ENCODE measurements at regions of chr11 and their contacts with region 1.

Region 1: GRCh38 chr11:7513234-7514098 is at the start of gene PPFIBP2:
- DNase-seq: peak; percentile 85
- ATAC-seq: peak; percentile 95
- H3K4me3 Mint-ChIP-seq: peak within 1 kb of the TSS; percentile 83
- H3K27ac Mint-ChIP-seq: peak within 1 kb of the TSS; percentile 85
- H3K4me1 Mint-ChIP-seq: peaks cover 19% of the 10 kb centered on the region
- H3K27me3 Mint-ChIP-seq: peaks cover 25% of the 10 kb centered on the region
- total RNA-seq, gene PPFIBP2: 7.8 to 10.0 TPM

Region 2: DNA sequence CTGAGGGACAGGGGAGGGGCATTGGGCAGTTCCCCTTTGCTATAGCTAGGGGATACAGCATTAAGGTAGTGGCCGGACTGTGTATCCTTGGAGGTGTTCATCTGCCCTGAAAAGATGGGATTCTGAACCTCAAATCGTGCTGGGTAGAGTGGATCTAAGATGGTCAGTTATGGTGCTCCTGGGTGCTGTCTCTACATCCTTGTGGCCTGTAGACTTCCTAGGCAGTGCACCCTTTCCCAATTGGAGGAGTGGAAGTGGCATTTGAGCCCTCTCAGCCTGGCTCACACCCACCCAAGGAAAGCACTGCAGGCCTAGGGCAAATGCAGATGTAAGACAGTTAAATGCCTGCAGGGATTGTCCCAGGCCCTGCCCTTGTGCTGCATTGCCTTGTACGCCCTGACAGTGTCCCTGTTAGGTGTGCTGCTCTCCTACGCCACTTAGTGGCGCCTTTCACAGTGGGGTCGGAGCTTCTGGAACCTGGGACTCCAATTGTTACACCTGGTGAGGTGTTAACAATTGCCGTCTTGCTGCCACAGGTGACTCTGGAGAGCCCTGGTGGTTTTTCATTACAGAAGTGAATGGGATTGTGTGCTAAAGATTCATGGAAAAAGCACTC is 35.3 kb after region 1 on chr11:
- CTCF ChIA-PET with region 1: interaction called, 11 read pairs
- DNase-seq: peak; percentile 50
- ATAC-seq: peak; percentile 67
- H3K4me3 Mint-ChIP-seq: no peak overlapping the region
- H3K27ac Mint-ChIP-seq: no peak overlapping the region
- H3K4me1 Mint-ChIP-seq: peaks cover 1% of the 10 kb centered on the region
- H3K27me3 Mint-ChIP-seq: no peaks in the 10 kb centered on the region

Region 3: DNA sequence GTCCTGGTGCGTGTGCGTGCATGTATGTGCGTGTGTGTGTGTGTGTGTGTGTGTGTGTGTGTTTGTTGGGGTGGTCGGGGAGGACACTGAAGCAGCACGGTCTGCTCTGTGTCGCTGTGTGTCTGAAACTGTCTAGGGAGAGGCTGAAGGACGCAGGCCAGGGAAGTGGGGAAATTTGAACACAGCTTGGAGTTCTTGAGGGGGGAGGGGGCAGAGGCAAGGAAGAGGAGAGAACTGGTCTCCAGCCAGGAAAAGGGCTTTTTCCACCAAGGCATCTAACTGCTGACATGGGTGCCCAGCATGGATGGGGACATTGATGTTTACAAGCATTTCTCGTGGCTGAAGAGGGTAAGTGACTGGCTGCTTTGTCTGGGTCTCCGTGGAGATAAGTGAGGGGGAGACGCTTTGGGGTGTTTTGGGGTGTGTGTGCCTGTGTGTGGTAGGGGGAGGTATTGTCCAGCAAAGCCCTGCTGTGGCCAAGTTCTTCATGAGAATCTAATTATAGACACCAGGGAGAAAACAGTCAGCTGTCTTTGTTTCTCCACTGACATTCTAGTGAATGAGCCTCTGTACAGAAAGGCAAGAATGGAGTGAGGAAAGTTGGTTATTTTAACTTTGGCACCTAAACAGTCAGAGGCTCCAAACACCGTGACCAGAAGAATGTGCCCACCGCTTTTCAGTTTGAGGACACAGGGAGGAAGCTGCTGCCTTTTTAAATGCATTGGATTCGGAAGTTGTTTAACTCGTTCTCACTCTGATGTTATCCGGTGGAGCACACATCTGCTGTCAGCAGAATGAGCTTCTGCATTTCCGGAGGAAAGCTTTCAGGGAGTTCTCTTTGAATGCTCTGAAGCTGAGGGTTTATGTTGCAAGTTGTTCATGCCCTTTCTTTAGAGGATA is 64.1 kb after region 1 on chr11:
- CTCF ChIA-PET with region 1: interaction called, 18 read pairs
- DNase-seq: peak; percentile 43
- ATAC-seq: peak; percentile 72
- H3K4me3 Mint-ChIP-seq: peak overlapping the region; percentile 38
- H3K27ac Mint-ChIP-seq: peak overlapping the region; percentile 77
- H3K4me1 Mint-ChIP-seq: peaks cover 42% of the 10 kb centered on the region
- H3K27me3 Mint-ChIP-seq: peaks cover 5% of the 10 kb centered on the region

Region 4: GRCh38 chr11:7657306-7658025 is 144.0 kb after region 1 on chr11:
- CTCF ChIA-PET with region 1: interaction called, 38 read pairs
- DNase-seq: peak; percentile 54
- ATAC-seq: peak; percentile 76
- H3K4me3 Mint-ChIP-seq: no peak overlapping the region
- H3K27ac Mint-ChIP-seq: no peak overlapping the region
- H3K4me1 Mint-ChIP-seq: no peaks in the 10 kb centered on the region
- H3K27me3 Mint-ChIP-seq: no peaks in the 10 kb centered on the region

Region 5: DNA sequence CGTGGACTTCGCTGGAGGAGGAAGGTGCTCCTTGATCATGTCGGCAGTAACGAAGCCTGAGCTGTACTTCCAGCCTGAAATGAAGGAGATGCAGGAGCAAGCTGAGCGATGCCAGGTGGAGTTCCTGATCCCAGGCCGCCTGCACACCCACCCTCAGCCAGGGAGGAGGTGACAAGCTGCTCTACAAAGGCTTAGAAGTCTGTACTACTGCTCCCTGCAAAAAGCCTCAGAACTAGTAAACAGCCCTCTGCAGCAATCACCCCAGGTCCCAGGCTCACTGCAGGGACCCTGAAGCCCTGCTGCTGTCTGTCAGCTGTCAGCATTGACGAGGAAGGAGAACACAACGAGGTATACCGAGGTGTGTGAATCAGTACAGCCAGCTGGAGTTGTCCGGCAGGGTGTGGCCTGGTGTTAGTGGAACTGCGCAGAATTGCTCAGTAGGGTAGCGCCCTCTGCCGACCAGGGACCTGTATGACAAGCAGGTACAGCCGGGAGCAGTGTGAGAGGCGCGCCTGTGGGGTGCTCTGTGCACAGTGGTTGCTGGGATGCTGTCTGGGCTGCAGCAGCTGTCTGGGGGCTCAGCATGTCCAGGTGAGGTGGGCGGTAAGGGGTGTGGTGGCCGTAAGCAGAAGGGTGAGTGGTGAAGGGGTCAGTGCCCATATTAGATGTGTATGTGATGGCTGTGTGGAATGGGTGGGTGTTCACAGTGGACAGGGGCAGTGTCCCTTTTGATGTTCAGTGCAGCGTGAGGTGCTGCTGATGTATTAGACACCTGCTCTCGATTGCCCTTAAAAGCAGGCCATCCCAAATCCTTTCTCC is 152.2 kb after region 1 on chr11:
- CTCF ChIA-PET with region 1: interaction called, 34 read pairs
- DNase-seq: peak; percentile 85
- ATAC-seq: peak; percentile 96
- H3K4me3 Mint-ChIP-seq: no peak overlapping the region
- H3K27ac Mint-ChIP-seq: no peak overlapping the region
- H3K4me1 Mint-ChIP-seq: no peaks in the 10 kb centered on the region
- H3K27me3 Mint-ChIP-seq: no peaks in the 10 kb centered on the region

Region 6: GRCh38 chr11:7696424-7696823 is 183.0 kb after region 1 on chr11:
- CTCF ChIA-PET with region 1: interaction called, 13 read pairs
- DNase-seq: no peak
- ATAC-seq: no peak
- H3K4me3 Mint-ChIP-seq: no peak overlapping the region
- H3K27ac Mint-ChIP-seq: no peak overlapping the region
- H3K4me1 Mint-ChIP-seq: peaks cover 2% of the 10 kb centered on the region
- H3K27me3 Mint-ChIP-seq: peaks cover 39% of the 10 kb centered on the region

Region 7: DNA sequence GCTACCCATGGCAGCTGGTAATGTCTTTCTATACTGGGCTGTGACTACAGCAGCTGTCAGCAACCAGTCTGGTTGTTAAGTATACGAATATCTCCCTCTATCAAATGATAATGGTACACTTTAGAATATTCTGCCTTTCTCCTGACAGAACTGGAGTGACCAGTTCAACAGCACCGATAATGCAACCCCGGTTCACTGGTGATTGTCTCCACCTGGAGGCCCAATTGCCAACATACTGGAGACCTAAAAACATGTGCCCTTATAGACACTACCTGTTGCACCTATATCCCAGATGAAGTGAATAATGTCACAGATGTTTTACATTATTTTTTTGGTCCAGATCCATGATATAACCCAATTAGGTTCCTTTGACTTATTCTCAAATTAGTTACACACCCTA is 262.2 kb after region 1 on chr11:
- CTCF ChIA-PET with region 1: no interaction called
- DNase-seq: no peak
- ATAC-seq: no peak
- H3K4me3 Mint-ChIP-seq: no peak overlapping the region
- H3K27ac Mint-ChIP-seq: no peak overlapping the region
- H3K4me1 Mint-ChIP-seq: no peaks in the 10 kb centered on the region
- H3K27me3 Mint-ChIP-seq: no peaks in the 10 kb centered on the region

Measured in activated CD8-positive, alpha-beta memory T cell treated with anti-CD3 and anti-CD28 coated beads, Interleukin-2, amount 10 ng/mL, durations not matched to agents 7 days and 5 days (primary cell).